T-cell (primary cell): ENCODE measurements at regions of chr3 and their contacts with region 1.

Region 1: DNA sequence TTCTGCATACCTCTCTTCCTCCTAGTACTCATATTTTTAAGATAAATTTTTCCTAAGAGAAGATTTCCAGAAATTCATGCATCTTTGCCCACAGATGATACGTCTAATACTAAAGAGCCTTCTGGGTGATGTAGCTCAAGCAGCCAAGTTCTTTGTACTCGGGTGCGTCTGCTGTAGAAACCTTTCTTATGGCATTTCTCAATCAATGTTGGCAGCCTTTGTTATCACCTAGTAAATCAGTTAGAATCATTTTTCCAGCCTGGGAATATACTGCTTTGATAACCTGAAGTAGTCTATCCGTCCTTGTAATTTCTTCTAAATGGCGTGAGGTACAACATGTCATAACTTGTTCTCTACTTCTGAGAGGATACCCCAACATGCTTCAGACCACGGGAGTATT is 104.5 kb downstream of the GOLIM4 start:
- DNase-seq: no peak
- ATAC-seq: no peak
- H3K4me3 ChIP-seq: no peak overlapping the region
- H3K4me3 Mint-ChIP-seq: no peak overlapping the region
- H3K27ac ChIP-seq: no peak overlapping the region
- H3K27ac Mint-ChIP-seq: no peak overlapping the region
- H3K4me1 ChIP-seq: no peaks in the 10 kb centered on the region
- H3K4me1 Mint-ChIP-seq: no peaks in the 10 kb centered on the region
- H3K27me3 ChIP-seq: no peaks in the 10 kb centered on the region
- H3K27me3 Mint-ChIP-seq: peaks cover 0 to 4% of the 10 kb centered on the region in 2 donors

Region 2: GRCh38 chr3:167978031-167978430 is 13.2 kb before region 1 on chr3:
- CTCF ChIA-PET with region 1: interaction called in 1 of 2 experiments, 11 read pairs
- POLR2A ChIA-PET with region 1: no interaction called
- DNase-seq: no peak
- ATAC-seq: no peak
- H3K4me3 ChIP-seq: no peak overlapping the region
- H3K4me3 Mint-ChIP-seq: no peak overlapping the region
- H3K27ac ChIP-seq: no peak overlapping the region
- H3K27ac Mint-ChIP-seq: no peak overlapping the region
- H3K4me1 ChIP-seq: no peaks in the 10 kb centered on the region
- H3K4me1 Mint-ChIP-seq: no peaks in the 10 kb centered on the region
- H3K27me3 ChIP-seq: peaks cover 0 to 4% of the 10 kb centered on the region in 2 experiments
- H3K27me3 Mint-ChIP-seq: no peaks in the 10 kb centered on the region